GM13977 (cell line): ENCODE measurements at regions of chr3 and their contacts with region 1.

Region 1: DNA sequence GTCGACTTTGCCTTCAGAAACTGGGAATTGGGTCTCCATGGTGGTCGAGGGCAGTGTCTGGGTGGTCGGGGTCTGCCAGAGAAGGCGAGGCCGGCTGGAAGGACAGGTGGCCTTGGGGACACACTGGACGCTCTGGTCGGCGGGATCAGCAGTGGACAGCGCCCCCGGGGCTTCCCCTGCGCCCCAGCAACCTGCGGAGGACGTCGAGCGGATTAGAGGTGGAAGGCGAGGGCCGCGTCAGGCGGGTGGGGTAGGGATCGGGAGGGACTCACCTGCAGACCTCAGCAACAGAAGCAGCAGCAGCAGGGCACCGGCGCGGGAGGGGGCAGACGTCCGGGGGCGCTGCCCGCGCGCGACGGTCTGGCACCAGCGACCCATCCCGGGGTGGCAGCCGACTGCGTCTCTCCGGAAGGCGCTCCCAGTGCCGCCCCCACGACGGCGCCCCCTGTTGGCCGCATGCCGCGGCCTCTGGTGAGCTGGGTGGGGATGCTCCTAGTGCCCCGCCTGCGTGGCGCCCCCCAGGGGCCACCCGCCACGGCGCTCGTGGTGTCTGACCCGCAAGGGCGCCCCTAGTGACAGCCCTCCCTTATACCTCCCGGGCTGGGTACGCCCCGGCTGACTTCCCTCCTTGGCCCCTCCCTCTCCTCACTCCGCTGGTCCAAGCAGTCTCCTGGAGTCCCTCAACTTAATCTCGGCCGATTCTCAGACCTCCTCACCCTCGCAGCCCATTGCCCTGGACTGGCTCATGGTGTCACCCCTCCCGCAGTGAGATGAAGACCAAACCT is at the start of gene PRSS50:
- DNase-seq: no peak
- CTCF ChIP-seq: peak; percentile 28

Region 2: GRCh38 chr3:46462111-46462510 is 255.5 kb before region 1 on chr3:
- in situ Hi-C with region 1: no loop called
- DNase-seq: no peak
- CTCF ChIP-seq: no peak

Region 3: DNA sequence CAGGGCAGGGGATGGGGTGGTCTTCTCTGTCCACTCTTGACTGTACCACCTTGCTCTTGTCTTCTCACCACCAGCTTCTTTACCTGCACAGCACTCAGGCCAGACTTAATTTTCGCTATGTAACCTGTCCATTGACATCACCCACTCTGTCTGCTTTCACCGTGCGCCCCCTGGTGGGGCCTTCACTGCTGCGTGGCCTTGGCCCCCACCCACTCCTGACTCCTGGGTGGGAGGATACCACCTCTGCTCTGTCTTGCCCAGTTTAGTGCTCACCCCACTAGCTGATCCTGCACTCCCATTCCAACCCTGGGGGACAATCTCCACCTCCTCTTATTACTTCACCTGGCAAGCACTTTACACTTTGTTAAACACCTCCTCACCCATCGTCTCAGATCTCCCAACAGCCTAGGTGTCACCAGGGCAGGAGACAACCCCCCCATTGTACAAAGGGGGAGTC is 177.6 kb after region 1 on chr3:
- in situ Hi-C with region 1: loop called (anchors 10 kb)
- DNase-seq: peak; percentile 87
- CTCF ChIP-seq: peak; percentile 93

Region 4: DNA sequence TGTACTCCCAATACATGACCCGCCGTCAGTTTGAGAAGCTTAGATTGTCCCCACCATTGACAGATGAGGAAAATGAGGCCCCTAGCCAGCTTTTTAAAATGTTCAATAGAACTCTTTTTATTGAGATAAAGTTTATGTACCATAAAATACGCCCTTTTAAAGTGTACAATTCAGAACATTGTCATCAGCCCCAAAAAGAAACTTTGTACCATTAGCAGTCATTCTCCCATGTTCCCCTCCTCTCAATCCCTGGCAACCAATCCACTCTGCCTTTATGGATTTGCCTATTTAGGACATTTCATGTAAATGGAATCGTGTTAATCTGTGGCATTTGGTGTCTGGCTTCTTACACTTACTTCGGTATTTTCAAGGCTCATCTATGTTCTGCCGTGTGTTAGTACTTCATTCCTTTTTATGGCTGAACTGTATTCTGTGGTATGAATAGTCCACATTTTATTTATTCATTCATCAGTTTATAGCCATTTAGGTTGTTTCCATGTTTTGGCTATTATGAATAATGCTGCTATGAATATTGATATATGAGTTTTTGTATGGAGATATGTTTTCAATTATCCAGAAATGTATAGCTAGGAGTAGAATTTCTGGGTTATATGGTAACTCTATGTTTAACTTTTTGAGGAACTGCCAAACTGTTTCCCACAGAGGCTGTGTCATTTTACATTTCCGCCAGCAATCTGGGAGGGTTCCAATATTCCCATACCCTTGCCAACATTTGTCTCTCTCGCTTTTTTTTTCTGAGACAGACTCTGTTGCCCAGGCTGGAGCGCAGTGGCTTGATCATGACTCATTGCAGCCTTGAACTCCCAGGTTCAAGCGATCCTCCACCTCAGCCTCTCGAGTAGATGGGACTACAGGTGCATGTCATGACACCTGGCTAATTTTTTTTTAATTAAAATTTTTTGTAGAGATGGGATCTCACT is 647.8 kb after region 1 on chr3:
- in situ Hi-C with region 1: loop called (anchors 10 kb)
- DNase-seq: no peak
- CTCF ChIP-seq: no peak